Naive thymus-derived CD8-positive, alpha-beta T cell (primary cell): ENCODE measurements at regions of chr1 and their contacts with region 1.

Region 1: DNA sequence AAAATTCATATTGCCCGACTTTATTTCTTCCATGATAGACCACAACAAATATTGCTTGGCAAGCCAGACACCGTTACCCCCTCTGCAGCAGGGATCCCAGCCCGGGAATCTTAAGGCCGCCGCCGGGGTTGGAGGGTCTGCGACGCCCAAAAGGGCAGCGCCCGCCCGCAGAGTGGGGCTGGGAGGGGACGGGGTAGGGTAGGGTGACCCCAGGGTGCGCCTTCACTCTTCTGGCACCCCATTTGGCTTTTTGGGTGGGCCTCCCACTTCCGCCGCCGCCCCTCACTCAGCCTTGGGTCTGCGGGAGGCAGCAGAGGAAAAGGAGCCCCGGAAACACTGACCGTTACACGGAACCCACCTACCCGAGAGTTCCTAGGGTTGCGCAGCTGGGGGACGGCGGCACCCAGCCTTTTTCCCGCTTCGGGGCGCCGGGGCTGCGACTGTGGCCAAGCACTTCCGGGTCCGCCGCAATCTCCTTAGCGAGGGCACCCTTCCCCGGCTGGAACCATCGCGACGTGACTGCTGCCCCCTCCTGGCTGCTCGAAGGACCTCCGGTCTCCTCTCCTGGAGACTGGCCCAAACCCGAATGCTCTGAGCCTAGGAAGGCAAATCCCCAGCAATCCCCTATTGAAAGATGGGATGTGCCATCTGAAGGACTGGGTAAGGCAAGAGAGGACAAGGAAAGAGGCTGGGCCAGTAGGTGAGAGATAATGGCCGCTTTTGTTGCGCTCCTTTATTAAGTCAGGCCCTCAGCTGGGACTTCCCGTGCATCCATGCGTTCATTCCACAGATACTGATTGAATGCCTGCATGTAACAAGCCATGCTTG is at the start of gene PIGC:
- DNase-seq: peak; percentile 81 to 94 (median 88)
- ATAC-seq: peak; percentile 99
- H3K4me3 Mint-ChIP-seq: peak within 1 kb of the TSS; percentile 87 to 96 (median 94)
- H3K27ac Mint-ChIP-seq: peak within 1 kb of the TSS; percentile 92 to 97 (median 96)
- H3K4me1 Mint-ChIP-seq: peaks cover 38 to 50% (median 43%) of the 10 kb centered on the region in 4 donors
- H3K27me3 Mint-ChIP-seq: no peaks in the 10 kb centered on the region
- polyA plus RNA-seq, gene PIGC: 69.1 to 92.8 (median 86.1) TPM

Region 2: GRCh38 chr1:172429331-172430127 is 14.3 kb before region 1 on chr1:
- POLR2A ChIA-PET with region 1: interaction called, 13 read pairs
- DNase-seq: peak in 9 of 10 donors; percentile 11 to 73 (median 42)
- ATAC-seq: peak; percentile 72 to 73
- H3K4me3 Mint-ChIP-seq: peak overlapping the region in 2 of 10 donors; percentile 6 to 33
- H3K27ac Mint-ChIP-seq: peak overlapping the region in 8 of 10 donors; percentile 4 to 86 (median 74)
- H3K4me1 Mint-ChIP-seq: peaks cover 36 to 45% (median 41%) of the 10 kb centered on the region in 4 donors
- H3K27me3 Mint-ChIP-seq: no peaks in the 10 kb centered on the region